HepG2 (cell line): ENCODE measurements at regions of chr1 and their contacts with region 1.

Region 1: GRCh38 chr1:31955917-31956736 is 18.0 kb upstream of the PTP4A2 start:
- DNase-seq: peak; percentile 70
- ATAC-seq: peak; percentile 52
- H3K4me3 ChIP-seq: peak overlapping the region in 1 of 3 experiments; percentile 49; a peak in 2 of 6 replicates
- H3K27ac ChIP-seq: no peak overlapping the region
- H3K4me1 ChIP-seq: peaks cover 31% of the 10 kb centered on the region
- H3K27me3 ChIP-seq: no peaks in the 10 kb centered on the region; a peak in 1 of 5 replicates
- CTCF ChIP-seq: peak; percentile 37
- EP300 ChIP-seq: no peak
- POLR2A ChIP-seq: no peak
- RAD21 ChIP-seq: no peak

Region 2: GRCh38 chr1:31815752-31816500 is 140.2 kb before region 1 on chr1 and contains the start of gene SPOCD1:
- CTCF ChIA-PET with region 1: no interaction called
- POLR2A ChIA-PET with region 1: interaction called, 3 read pairs
- in situ Hi-C with region 1: loop called (anchors 5 kb)
- intact Hi-C with region 1: loop called (anchors 2 kb)
- DNase-seq: peak; percentile 85
- ATAC-seq: peak; percentile 82
- H3K4me3 ChIP-seq: peak within 1 kb of the TSS; percentile 29 to 67 (median 31); a peak in 5 of 6 replicates
- H3K27ac ChIP-seq: no peak within 1 kb of the TSS
- H3K4me1 ChIP-seq: peaks cover 10% of the 10 kb centered on the region
- H3K27me3 ChIP-seq: peaks cover 0 to 16% of the 10 kb centered on the region in 2 experiments; a peak in 1 of 5 replicates
- CTCF ChIP-seq: peak; percentile 97
- EP300 ChIP-seq: no peak
- POLR2A ChIP-seq: no peak
- RAD21 ChIP-seq: peak; percentile 89
- total RNA-seq, gene SPOCD1: 0.08 and 0.24 TPM in 2 replicates

Region 3: DNA sequence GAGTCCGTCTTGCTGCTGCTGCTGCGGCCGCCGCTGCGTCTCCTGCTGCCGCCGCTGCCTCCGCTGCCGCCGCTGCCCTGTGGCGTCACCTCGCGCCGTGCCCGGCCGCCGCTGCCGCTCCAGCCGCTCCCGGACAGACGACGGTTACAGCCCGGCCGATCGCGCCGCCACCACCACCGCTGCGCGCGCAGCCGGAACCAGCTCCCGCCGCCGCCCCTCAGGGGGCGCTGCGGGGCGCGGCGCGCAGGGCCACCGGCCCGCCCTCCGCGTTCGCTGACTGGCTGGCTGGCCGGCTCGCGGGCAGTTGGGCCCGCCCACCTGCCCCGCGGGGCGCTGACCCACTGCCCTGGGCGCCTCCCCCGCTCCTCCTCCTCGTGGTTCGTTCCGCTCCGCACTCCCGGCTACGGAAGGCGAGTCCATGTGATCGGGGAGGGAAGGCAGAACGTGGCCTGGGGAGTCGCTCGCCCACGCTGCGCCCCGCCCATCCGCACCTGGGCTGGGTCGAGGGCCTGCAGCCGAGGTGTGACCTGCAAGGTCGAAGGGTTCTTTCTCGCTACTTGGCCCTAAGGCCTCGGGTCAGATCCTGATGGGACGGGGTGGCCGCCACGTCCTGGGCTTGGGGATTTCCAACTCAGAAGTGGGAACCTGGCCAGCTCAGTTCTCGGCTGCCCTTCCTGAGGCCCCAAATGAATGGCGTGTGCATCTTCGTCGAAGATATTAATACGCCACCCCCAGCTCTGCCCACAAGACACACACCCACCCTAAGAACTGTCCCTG is 17.8 kb before region 1 on chr1 and contains the start of gene PTP4A2:
- CTCF ChIA-PET with region 1: no interaction called
- POLR2A ChIA-PET with region 1: interaction called, 18 read pairs
- in situ Hi-C with region 1: no loop called
- intact Hi-C with region 1: no loop called
- DNase-seq: peak; percentile 91
- ATAC-seq: peak; percentile 85
- H3K4me3 ChIP-seq: peak within 1 kb of the TSS; percentile 66 to 99 (median 98)
- H3K27ac ChIP-seq: peak within 1 kb of the TSS; percentile 84
- H3K4me1 ChIP-seq: peaks cover 60% of the 10 kb centered on the region
- H3K27me3 ChIP-seq: no peaks in the 10 kb centered on the region; a peak in 1 of 5 replicates
- CTCF ChIP-seq: peak; percentile 40; the same call in 1 of the 2 replicates
- EP300 ChIP-seq: no peak
- POLR2A ChIP-seq: peak; percentile 41 to 71; a peak in 3 of 4 replicates
- RAD21 ChIP-seq: 0 out of 2 replicates have a peak, but pooled peaks have one; percentile 36
- total RNA-seq, gene PTP4A2: 225 and 284 TPM in 2 replicates